Panc1 (cell line): ENCODE measurements at regions of chr19 and their contacts with region 1.

Region 1: DNA sequence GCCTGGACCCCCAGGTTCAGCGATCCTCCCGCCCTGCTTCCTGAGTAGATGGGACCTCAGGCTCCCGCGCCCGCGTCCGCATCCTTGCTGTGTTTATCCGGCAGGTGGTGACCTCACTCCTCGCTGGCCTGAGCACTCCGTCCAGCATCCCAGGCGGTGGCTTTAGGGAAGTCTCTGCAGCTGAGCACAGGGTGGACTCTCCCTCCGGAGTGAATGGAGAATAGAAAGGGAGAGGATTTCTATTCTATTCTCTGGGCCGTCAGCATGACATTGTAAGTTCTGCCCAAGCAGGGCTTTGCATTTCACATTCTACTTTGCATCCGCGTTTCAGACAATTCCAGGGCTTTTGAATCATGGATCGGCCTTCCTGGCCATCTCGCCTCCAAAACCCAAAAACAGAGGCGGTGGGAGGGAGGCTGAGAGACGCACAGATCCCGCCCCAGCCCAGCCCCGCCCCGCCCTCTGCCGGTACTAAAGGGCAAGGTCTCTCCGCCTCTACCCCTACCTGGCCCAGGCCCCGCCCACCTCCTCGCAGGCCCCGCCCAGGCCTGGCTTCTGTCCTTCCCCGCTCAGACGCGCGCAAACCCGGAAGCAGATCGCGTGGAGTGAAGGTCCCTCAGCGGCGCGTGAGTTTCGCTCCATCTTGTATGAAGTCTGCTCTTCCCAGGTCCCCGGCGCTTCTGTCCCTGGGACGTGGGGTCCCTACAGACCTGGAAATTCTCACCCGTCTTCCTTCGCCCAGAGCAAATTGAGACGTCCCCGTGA is at the start of gene ZNF525:
- DNase-seq: peak; percentile 57
- ATAC-seq: peak; percentile 100
- H3K4me3 ChIP-seq: peak within 1 kb of the TSS; percentile 87 to 91
- H3K27ac ChIP-seq: peak within 1 kb of the TSS; percentile 93
- H3K4me1 ChIP-seq: peaks cover 3% of the 10 kb centered on the region
- H3K27me3 ChIP-seq: no peaks in the 10 kb centered on the region
- CTCF ChIP-seq: peak; percentile 64
- total RNA-seq, gene ZNF525: 23.4 TPM

Region 2: GRCh38 chr19:52613299-52613906 is 751.9 kb before region 1 on chr19:
- CTCF ChIA-PET with region 1: no interaction called
- POLR2A ChIA-PET with region 1: no interaction called
- in situ Hi-C with region 1: no loop called
- intact Hi-C with region 1: no loop called
- DNase-seq: no peak
- ATAC-seq: no peak
- H3K4me3 ChIP-seq: no peak overlapping the region
- H3K27ac ChIP-seq: no peak overlapping the region
- H3K4me1 ChIP-seq: no peaks in the 10 kb centered on the region
- H3K27me3 ChIP-seq: no peaks in the 10 kb centered on the region
- CTCF ChIP-seq: no peak

Region 3: DNA sequence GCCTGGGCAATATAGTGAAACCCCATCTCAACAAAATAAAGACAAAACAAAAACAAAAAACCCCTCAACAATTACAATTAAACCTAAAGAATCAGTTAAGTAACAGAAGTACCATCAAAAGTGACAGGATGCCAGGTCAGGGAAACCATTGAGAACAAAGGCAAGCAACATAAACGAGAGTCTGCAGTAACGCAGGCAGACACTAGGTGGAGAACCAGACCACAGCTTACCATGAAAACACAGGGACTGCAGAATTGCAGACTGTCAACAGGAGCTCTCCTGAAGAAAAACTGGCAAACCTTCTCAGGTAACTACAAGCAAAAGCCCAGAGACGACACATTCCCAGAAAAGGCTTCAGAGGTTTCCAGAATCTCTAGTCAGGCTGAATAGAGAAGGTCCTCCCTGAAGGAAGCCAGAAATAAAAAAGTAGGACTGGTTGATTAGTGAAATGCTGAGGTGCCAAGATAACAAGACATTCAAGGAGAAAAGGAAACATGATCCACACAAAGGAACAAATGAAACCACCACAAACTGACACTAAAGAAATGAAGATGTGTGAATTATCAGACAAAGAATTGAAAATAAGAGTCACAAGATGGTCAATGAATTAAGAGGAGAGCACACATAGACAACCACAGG is 169.9 kb before region 1 on chr19:
- CTCF ChIA-PET with region 1: interaction called, 6 read pairs
- POLR2A ChIA-PET with region 1: no interaction called
- in situ Hi-C with region 1: no loop called
- intact Hi-C with region 1: loop called (anchors 5 kb)
- DNase-seq: peak; percentile 88
- ATAC-seq: peak; percentile 58
- H3K4me3 ChIP-seq: no peak overlapping the region
- H3K27ac ChIP-seq: no peak overlapping the region
- H3K4me1 ChIP-seq: peaks cover 7% of the 10 kb centered on the region
- H3K27me3 ChIP-seq: no peaks in the 10 kb centered on the region
- CTCF ChIP-seq: peak; percentile 99

Region 4: GRCh38 chr19:53389978-53390377 is 24.7 kb after region 1 on chr19:
- CTCF ChIA-PET with region 1: no interaction called
- POLR2A ChIA-PET with region 1: interaction called, 11 read pairs
- in situ Hi-C with region 1: no loop called
- intact Hi-C with region 1: no loop called
- DNase-seq: no peak
- ATAC-seq: no peak
- H3K4me3 ChIP-seq: no peak overlapping the region
- H3K27ac ChIP-seq: no peak overlapping the region
- H3K4me1 ChIP-seq: no peaks in the 10 kb centered on the region
- H3K27me3 ChIP-seq: no peaks in the 10 kb centered on the region
- CTCF ChIP-seq: no peak